ENCODE measurements at regions of chr11 and their contacts with region 1.

Region 1: GRCh38 chr11:68257475-68258362 is 14.1 kb downstream of the C11orf24 start:
- DNase-seq: peak; percentile 88 to 99 (median 91)
- ATAC-seq: peak; percentile 96
- H3K4me3 ChIP-seq: no peak overlapping the region
- H3K4me3 Mint-ChIP-seq: no peak overlapping the region
- H3K27ac ChIP-seq: no peak overlapping the region
- H3K27ac Mint-ChIP-seq: no peak overlapping the region
- H3K4me1 ChIP-seq: peaks cover 5% of the 10 kb centered on the region
- H3K4me1 Mint-ChIP-seq: peaks cover 3% of the 10 kb centered on the region
- H3K27me3 ChIP-seq: no peaks in the 10 kb centered on the region
- H3K27me3 Mint-ChIP-seq: no peaks in the 10 kb centered on the region
- CTCF ChIP-seq: peak; percentile 70

Region 2: DNA sequence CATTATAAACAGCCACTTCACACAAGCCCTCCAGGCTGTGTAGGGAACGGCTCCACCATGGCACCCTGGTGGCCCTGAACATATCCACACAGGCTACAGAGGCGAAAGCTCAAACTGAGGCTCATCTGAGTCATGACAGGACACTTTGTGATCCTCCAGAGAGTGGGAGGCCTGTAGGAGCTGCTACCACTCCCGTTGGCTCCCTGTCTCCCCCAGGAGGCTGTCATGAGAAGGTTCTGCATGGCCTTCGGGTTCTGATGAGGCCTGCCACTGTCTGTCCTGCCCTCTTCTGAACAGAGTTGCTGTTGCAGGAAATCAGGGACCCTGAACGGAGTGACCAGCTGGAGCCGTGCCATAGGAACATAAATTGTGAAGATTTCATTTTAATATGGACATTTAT is 559.5 kb before region 1 on chr11:
- CTCF ChIA-PET with region 1: no interaction called
- POLR2A ChIA-PET with region 1: no interaction called
- intact Hi-C with region 1: no loop called
- DNase-seq: peak in 1 of 9 experiments; percentile 11
- ATAC-seq: no peak
- H3K4me3 ChIP-seq: no peak overlapping the region
- H3K4me3 Mint-ChIP-seq: no peak overlapping the region
- H3K27ac ChIP-seq: no peak overlapping the region
- H3K27ac Mint-ChIP-seq: no peak overlapping the region
- H3K4me1 ChIP-seq: no peaks in the 10 kb centered on the region
- H3K4me1 Mint-ChIP-seq: no peaks in the 10 kb centered on the region
- H3K27me3 ChIP-seq: no peaks in the 10 kb centered on the region
- H3K27me3 Mint-ChIP-seq: peaks cover 7% of the 10 kb centered on the region
- CTCF ChIP-seq: no peak

Region 3: GRCh38 chr11:68191661-68192579 is 65.8 kb before region 1 on chr11:
- CTCF ChIA-PET with region 1: no interaction called
- POLR2A ChIA-PET with region 1: no interaction called
- intact Hi-C with region 1: no loop called
- DNase-seq: no peak
- ATAC-seq: no peak
- H3K4me3 ChIP-seq: no peak overlapping the region
- H3K4me3 Mint-ChIP-seq: no peak overlapping the region
- H3K27ac ChIP-seq: no peak overlapping the region
- H3K27ac Mint-ChIP-seq: peak overlapping the region; percentile 16
- H3K4me1 ChIP-seq: peaks cover 12% of the 10 kb centered on the region
- H3K4me1 Mint-ChIP-seq: peaks cover 59% of the 10 kb centered on the region
- H3K27me3 ChIP-seq: no peaks in the 10 kb centered on the region
- H3K27me3 Mint-ChIP-seq: no peaks in the 10 kb centered on the region
- CTCF ChIP-seq: no peak

Region 4: GRCh38 chr11:68271781-68272608 is 14.3 kb after region 1 on chr11 and contains the start of gene C11orf24:
- CTCF ChIA-PET with region 1: interaction called, 34 read pairs
- POLR2A ChIA-PET with region 1: interaction called, 7 read pairs
- intact Hi-C with region 1: loop called (anchors 1 kb)
- DNase-seq: peak; percentile 81 to 97 (median 93)
- ATAC-seq: peak; percentile 86
- H3K4me3 ChIP-seq: peak within 1 kb of the TSS; percentile 71 to 95
- H3K4me3 Mint-ChIP-seq: peak within 1 kb of the TSS; percentile 91
- H3K27ac ChIP-seq: peak within 1 kb of the TSS; percentile 93 to 97
- H3K27ac Mint-ChIP-seq: peak within 1 kb of the TSS; percentile 95
- H3K4me1 ChIP-seq: peaks cover 26% of the 10 kb centered on the region
- H3K4me1 Mint-ChIP-seq: peaks cover 32% of the 10 kb centered on the region
- H3K27me3 ChIP-seq: no peaks in the 10 kb centered on the region
- H3K27me3 Mint-ChIP-seq: no peaks in the 10 kb centered on the region
- CTCF ChIP-seq: no peak
- total RNA-seq, gene C11orf24: 6.5 to 8.2 TPM

Region 5: GRCh38 chr11:68287419-68287818 is 29.7 kb after region 1 on chr11:
- CTCF ChIA-PET with region 1: interaction called, 14 read pairs
- POLR2A ChIA-PET with region 1: no interaction called
- intact Hi-C with region 1: no loop called
- DNase-seq: no peak
- ATAC-seq: no peak
- H3K4me3 ChIP-seq: no peak overlapping the region
- H3K4me3 Mint-ChIP-seq: no peak overlapping the region
- H3K27ac ChIP-seq: no peak overlapping the region
- H3K27ac Mint-ChIP-seq: no peak overlapping the region
- H3K4me1 ChIP-seq: peaks cover 6% of the 10 kb centered on the region
- H3K4me1 Mint-ChIP-seq: peaks cover 9% of the 10 kb centered on the region
- H3K27me3 ChIP-seq: no peaks in the 10 kb centered on the region
- H3K27me3 Mint-ChIP-seq: peaks cover 3% of the 10 kb centered on the region
- CTCF ChIP-seq: no peak

Region 6: GRCh38 chr11:68306636-68307035 is 48.9 kb after region 1 on chr11:
- CTCF ChIA-PET with region 1: interaction called, 359 read pairs
- POLR2A ChIA-PET with region 1: no interaction called
- intact Hi-C with region 1: no loop called
- DNase-seq: no peak
- ATAC-seq: no peak
- H3K4me3 ChIP-seq: no peak overlapping the region
- H3K4me3 Mint-ChIP-seq: no peak overlapping the region
- H3K27ac ChIP-seq: no peak overlapping the region
- H3K27ac Mint-ChIP-seq: no peak overlapping the region
- H3K4me1 ChIP-seq: no peaks in the 10 kb centered on the region
- H3K4me1 Mint-ChIP-seq: peaks cover 5% of the 10 kb centered on the region
- H3K27me3 ChIP-seq: no peaks in the 10 kb centered on the region
- H3K27me3 Mint-ChIP-seq: no peaks in the 10 kb centered on the region
- CTCF ChIP-seq: no peak

Region 7: DNA sequence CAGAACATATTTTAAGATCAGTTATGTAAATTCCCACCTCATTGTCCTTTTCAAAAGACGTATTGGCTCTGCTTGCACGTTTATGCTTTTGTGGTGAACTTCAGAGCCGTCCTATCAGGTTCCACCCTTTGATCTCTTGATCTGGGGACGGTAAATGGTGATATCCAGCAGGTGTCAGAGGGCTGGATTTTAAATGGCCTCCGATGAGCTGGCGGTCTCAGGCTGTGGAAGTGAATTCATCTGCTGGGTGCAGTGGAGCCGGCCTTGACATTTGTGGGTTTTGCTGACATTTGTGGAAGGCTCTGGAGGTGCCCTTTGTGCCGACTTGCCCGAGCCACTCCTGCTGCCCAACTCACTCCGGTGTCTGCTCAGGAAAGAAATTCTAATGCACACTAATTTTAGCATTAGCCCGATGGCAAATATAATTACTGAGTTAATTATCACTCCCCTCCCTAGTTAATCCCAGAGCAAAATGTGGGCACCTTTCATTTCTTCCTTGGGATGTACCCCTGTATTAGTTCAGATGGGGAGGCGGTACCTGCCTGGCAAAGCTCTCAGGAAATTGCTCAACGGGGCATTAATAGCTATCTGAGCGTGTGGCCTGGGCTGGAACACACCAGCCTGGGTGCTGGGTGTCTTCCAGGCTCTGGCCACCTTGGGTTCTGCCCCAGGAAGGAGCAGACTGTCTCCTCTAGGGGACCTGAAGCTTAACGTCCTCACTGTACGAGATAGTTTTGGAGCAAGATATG is 63.7 kb after region 1 on chr11:
- CTCF ChIA-PET with region 1: no interaction called
- POLR2A ChIA-PET with region 1: no interaction called
- intact Hi-C with region 1: no loop called
- DNase-seq: no peak
- ATAC-seq: no peak
- H3K4me3 ChIP-seq: no peak overlapping the region
- H3K4me3 Mint-ChIP-seq: no peak overlapping the region
- H3K27ac ChIP-seq: no peak overlapping the region
- H3K27ac Mint-ChIP-seq: no peak overlapping the region
- H3K4me1 ChIP-seq: peaks cover 2% of the 10 kb centered on the region
- H3K4me1 Mint-ChIP-seq: no peaks in the 10 kb centered on the region
- H3K27me3 ChIP-seq: no peaks in the 10 kb centered on the region
- H3K27me3 Mint-ChIP-seq: peaks cover 10% of the 10 kb centered on the region
- CTCF ChIP-seq: no peak

Region 8: DNA sequence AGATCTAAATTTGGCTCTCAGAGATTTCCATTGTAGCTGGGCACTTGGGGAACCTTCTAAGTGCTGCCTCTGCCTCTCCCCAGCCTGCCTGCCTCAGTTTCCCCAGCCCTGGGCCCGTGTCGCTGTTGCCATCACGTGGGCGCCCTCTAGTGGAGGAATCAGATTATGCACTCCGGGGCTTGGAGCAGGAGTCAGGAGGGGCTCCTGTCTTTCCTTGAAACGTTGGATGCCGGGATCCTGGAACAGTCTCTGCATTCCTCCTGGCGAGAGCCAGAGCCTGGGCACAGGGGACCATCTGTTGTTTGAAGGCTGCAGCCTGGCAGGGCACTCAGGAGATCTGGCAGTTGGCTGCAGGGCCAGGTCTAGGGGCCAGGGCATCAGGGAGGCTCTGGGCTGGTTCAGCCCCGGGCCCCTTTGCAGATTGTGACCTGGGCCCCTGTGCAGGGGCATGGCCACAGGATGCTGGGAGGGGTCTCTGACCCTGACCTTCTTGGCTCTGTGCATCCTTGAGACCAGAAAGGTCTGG is 126.3 kb after region 1 on chr11:
- CTCF ChIA-PET with region 1: interaction called, 35 read pairs
- POLR2A ChIA-PET with region 1: no interaction called
- intact Hi-C with region 1: loop called (anchors 1 kb)
- DNase-seq: peak; percentile 34 to 78 (median 61)
- ATAC-seq: peak; percentile 44
- H3K4me3 ChIP-seq: no peak overlapping the region
- H3K4me3 Mint-ChIP-seq: no peak overlapping the region
- H3K27ac ChIP-seq: no peak overlapping the region
- H3K27ac Mint-ChIP-seq: no peak overlapping the region
- H3K4me1 ChIP-seq: peaks cover 4% of the 10 kb centered on the region
- H3K4me1 Mint-ChIP-seq: peaks cover 15% of the 10 kb centered on the region
- H3K27me3 ChIP-seq: no peaks in the 10 kb centered on the region
- H3K27me3 Mint-ChIP-seq: peaks cover 3% of the 10 kb centered on the region
- CTCF ChIP-seq: peak; percentile 94

Region 9: DNA sequence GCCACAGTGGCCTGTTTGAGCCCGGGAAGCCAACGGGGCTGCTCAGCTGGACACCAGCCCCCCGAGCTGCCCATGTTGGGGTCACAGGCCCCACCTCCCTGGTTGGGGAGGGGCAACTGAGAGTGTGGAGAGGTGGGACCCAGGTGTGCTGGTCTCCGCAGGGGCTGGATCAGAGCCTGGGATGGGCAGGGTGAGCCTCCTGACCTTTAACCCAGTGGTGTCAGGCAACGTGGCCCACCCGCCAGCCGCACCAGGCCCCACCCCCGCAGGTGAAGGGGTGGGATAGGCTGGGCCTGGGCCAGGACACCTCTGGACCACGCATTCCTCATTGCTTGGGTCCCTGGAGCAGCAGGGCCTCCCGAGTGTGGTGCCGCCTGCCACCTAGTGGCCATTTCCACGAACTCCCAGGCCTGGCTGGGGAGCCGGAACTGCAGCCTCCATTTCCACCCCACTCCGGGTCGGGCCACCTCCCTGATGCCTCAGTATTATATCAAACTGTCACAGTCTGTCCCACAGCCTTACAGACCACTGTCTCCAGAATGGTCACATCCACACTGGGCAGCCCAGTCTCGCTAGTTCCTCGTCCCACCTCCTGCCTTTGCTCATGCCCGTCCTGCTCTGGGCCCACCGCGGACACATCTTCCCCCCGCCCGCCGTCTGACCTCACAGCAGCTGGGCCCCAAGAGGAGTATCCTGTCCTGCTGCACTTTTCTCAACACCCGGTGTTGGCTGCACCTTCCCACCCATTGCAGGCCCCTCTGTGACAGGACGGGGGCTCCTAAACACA is 189.5 kb after region 1 on chr11:
- CTCF ChIA-PET with region 1: interaction called, 6 read pairs
- POLR2A ChIA-PET with region 1: no interaction called
- intact Hi-C with region 1: loop called in 1 of 2 experiments (anchors 1 kb)
- DNase-seq: peak; percentile 57 to 85 (median 76)
- ATAC-seq: peak; percentile 99
- H3K4me3 ChIP-seq: no peak overlapping the region
- H3K4me3 Mint-ChIP-seq: peak overlapping the region; percentile 26
- H3K27ac ChIP-seq: no peak overlapping the region
- H3K27ac Mint-ChIP-seq: no peak overlapping the region
- H3K4me1 ChIP-seq: peaks cover 7% of the 10 kb centered on the region
- H3K4me1 Mint-ChIP-seq: peaks cover 4% of the 10 kb centered on the region
- H3K27me3 ChIP-seq: no peaks in the 10 kb centered on the region
- H3K27me3 Mint-ChIP-seq: no peaks in the 10 kb centered on the region
- CTCF ChIP-seq: peak; percentile 84

Region 10: GRCh38 chr11:68610452-68611116 is 352.9 kb after region 1 on chr11:
- CTCF ChIA-PET with region 1: no interaction called
- POLR2A ChIA-PET with region 1: no interaction called
- intact Hi-C with region 1: no loop called
- DNase-seq: no peak
- ATAC-seq: no peak
- H3K4me3 ChIP-seq: no peak overlapping the region
- H3K4me3 Mint-ChIP-seq: no peak overlapping the region
- H3K27ac ChIP-seq: no peak overlapping the region
- H3K27ac Mint-ChIP-seq: no peak overlapping the region
- H3K4me1 ChIP-seq: no peaks in the 10 kb centered on the region
- H3K4me1 Mint-ChIP-seq: no peaks in the 10 kb centered on the region
- H3K27me3 ChIP-seq: no peaks in the 10 kb centered on the region
- H3K27me3 Mint-ChIP-seq: no peaks in the 10 kb centered on the region
- CTCF ChIP-seq: no peak

Region 11: DNA sequence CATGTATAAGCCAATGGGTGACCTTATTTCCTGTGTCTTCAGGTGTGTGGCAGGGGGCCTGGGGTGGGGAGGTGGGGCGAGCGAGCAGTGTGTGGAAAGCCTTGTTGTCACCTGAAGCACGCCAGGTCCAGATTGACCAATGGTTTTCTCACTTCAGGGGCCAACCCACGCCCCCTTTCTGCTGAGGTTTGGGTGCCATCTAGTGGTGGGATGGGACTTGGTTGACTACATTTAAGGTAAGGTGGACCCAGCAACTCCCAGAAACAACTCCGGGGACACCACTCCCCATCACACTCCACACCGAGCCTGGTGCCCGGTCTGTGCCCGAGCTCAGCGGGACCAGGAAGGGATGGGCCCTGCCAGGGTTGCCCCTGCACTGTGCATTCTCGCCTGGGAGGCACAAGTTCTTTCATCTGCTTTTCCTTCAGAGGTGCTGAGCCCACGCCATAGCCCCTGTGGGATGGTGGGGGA is 831.0 kb after region 1 on chr11:
- CTCF ChIA-PET with region 1: no interaction called
- POLR2A ChIA-PET with region 1: no interaction called
- intact Hi-C with region 1: loop called in 1 of 2 experiments (anchors 10 kb)
- DNase-seq: peak; percentile 20 to 69 (median 53)
- ATAC-seq: peak; percentile 71
- H3K4me3 ChIP-seq: no peak overlapping the region
- H3K4me3 Mint-ChIP-seq: no peak overlapping the region
- H3K27ac ChIP-seq: no peak overlapping the region
- H3K27ac Mint-ChIP-seq: no peak overlapping the region
- H3K4me1 ChIP-seq: no peaks in the 10 kb centered on the region
- H3K4me1 Mint-ChIP-seq: no peaks in the 10 kb centered on the region
- H3K27me3 ChIP-seq: no peaks in the 10 kb centered on the region
- H3K27me3 Mint-ChIP-seq: no peaks in the 10 kb centered on the region
- CTCF ChIP-seq: peak; percentile 62